Ascending aorta (tissue), 2 donors: ENCODE measurements at regions of chr11 and their contacts with region 1.

Region 1: GRCh38 chr11:70933981-70934583 is 318.3 kb downstream of the SHANK2 start:
- DNase-seq: no peak
- H3K4me3 ChIP-seq: no peak overlapping the region
- H3K27ac ChIP-seq: no peak overlapping the region
- H3K4me1 ChIP-seq: no peaks in the 10 kb centered on the region
- H3K27me3 ChIP-seq: no peaks in the 10 kb centered on the region
- CTCF ChIP-seq: no peak

Region 2: GRCh38 chr11:70688142-70688541 is 245.9 kb before region 1 on chr11:
- intact Hi-C with region 1: no loop called
- DNase-seq: no peak
- H3K4me3 ChIP-seq: no peak overlapping the region
- H3K27ac ChIP-seq: no peak overlapping the region
- H3K4me1 ChIP-seq: no peaks in the 10 kb centered on the region
- H3K27me3 ChIP-seq: no peaks in the 10 kb centered on the region
- CTCF ChIP-seq: no peak

Region 3: DNA sequence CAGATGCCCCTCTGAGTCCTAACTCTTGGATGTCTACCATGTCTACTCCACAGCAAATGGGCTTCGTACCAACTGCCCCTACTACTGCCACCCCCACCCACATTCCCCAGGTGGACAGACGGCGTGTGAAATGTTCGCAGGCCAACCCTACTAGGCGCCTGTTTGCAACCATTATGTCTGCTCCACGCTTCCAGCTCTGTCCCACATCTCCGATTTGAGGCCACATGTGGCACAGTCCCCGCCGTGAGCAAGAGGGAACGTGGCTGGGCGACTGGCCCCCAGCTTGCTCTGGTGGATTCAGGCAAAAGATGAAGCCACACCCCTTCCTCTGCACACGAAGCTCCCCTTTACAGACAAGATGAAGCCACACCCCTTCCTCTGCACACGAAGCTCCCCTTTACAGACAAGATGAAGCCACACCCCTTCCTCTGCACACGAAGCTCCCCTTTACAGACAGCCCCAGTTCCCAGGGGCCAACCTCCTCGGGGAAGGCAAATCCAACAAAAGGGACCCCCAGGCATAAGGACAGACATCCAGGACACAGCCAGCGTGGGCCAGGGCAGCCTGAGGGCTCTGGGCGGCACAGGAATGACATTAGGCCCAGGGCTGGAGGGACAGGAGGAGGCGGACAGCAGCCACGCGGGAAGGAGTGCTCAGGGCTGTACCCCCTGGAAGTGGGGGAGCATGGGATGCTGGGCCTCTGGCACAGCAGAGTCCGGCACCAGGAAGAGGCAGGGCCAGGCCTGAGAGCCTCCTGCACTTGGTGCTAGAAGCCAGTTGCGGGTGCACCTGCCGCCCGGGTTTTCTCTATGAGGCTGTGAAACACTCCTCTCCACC is 212.1 kb after region 1 on chr11:
- intact Hi-C with region 1: loop called (anchors 5 kb)
- DNase-seq: peak in 1 of 2 donors; percentile 37
- H3K4me3 ChIP-seq: no peak overlapping the region
- H3K27ac ChIP-seq: no peak overlapping the region
- H3K4me1 ChIP-seq: no peaks in the 10 kb centered on the region
- H3K27me3 ChIP-seq: no peaks in the 10 kb centered on the region
- CTCF ChIP-seq: no peak